HEK293T (cell line): ENCODE measurements at regions of chr15 and their contacts with region 1.

Region 1: DNA sequence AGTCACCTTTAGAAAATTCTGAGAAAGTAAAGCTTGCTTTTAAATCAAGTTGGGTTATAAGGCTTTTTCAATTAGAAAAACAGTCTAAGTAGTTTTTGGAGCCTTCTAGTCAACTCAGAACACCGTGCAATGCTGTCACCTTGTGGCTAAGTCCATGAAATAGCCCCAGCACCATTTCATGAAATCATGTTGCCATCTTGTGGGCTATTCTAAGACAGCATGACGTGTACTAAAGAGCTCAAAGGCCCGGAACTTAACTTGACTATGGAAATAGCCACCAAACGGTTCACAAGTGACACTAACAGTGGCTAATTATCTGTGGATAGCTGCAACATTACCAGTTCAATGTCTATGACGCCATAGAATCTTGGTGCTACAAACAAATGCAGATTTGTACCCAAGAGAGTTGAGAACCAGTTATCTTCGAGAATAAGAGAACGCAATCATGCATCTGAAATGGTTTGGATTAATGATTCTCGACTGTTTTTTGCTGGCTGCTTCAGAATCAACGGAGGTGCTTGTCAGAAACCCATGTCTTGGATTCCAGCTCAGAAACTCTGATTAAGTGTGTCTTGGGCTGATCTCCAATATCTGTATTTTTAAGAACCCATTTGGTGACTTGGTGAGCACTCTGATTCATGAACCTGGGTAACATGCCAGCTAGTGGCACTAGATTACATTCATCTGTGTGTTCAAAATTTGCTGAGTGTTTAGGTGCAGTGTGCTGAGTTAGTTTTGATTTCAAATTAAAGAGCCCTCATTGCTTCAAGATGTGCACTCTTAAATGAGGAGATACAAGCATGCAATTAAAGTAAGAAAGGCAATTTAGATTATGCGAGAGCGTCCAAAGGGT is 111.2 kb upstream of the MCTP2 start:
- DNase-seq: peak; percentile 73

Region 2: DNA sequence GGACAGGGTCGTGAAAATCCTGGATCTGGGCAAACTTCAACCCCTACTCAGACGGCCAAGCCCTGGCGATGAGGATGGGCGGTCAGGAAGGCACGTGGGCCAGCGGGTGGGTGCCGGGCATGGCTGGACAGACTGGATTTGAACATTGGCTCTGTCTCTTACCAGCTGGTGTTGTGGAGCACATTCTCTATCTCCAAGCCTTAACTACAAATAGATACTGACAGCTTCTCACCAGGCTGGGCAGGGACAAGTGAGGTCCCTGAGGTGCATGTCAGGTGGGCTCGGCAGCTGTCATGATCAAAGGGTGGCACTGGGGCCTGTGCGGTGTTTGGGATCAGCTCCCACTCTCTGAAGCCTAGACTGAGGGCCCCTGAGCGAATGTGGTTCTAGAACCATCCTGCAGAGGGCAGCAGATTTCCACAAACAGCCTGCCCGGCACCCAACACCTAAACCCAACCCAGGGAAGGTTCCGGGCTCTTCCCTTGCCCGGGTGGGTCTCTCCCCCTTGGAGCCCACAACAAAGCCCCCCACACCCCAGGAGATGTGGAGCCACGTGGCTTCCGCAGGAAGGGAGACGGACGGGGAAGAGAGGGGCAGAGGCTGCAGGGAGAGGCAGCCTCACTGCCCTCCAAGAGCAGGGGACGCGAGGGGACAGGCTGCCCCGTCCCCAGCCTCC is 1089.6 kb before region 1 on chr15:
- CTCF ChIA-PET with region 1: interaction called, 73 read pairs
- POLR2A ChIA-PET with region 1: interaction called, 5 read pairs
- DNase-seq: peak; percentile 85

Region 3: GRCh38 chr15:93035953-93036800 is 1084.0 kb before region 1 on chr15:
- CTCF ChIA-PET with region 1: interaction called, 73 read pairs
- POLR2A ChIA-PET with region 1: no interaction called
- DNase-seq: peak; percentile 81

Region 4: GRCh38 chr15:93087825-93088199 is 1032.3 kb before region 1 on chr15:
- CTCF ChIA-PET with region 1: interaction called, 11 read pairs
- POLR2A ChIA-PET with region 1: no interaction called
- DNase-seq: peak; percentile 81

Region 5: DNA sequence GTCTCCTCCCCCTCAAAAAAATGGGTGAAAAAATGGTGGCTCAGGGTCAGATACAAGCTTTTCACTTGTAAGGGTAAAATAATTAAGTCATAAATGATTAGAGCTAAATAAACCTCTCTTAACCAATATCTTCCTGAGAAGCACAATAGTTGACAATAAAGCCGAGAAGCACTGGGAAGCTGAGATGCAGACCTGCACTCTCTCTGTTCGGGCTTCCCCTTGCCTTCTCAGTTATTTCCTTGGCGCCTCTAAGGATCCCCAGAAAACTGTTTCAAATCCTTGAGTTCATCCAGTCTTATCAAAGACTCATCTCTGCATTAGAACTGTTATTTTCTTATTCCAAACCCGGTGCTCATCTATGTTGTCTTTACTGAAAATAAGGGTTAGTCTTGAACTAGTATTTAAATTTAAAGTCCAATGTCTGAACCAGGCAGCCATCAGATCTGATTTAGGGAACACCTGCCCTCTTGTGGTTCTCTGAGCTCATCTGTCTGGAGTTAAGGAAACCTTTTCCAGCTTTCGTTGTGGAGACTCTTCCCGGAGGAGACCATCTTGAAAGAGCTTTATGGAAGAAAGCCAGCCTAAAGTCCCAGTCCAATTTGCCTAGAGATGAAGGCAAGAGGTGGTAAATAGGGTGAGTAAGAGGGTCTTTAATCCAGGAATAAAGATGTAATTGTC is 145.2 kb before region 1 on chr15:
- CTCF ChIA-PET with region 1: interaction called, 18 read pairs
- POLR2A ChIA-PET with region 1: no interaction called
- DNase-seq: peak; percentile 58

Region 6: GRCh38 chr15:93997084-93997918 is 122.8 kb before region 1 on chr15:
- CTCF ChIA-PET with region 1: interaction called, 13 read pairs
- POLR2A ChIA-PET with region 1: no interaction called
- DNase-seq: peak; percentile 39

Region 7: GRCh38 chr15:94008104-94009074 is 111.8 kb before region 1 on chr15:
- CTCF ChIA-PET with region 1: interaction called, 14 read pairs
- POLR2A ChIA-PET with region 1: no interaction called
- DNase-seq: no peak

Region 8: GRCh38 chr15:94154245-94154644 is 34.1 kb after region 1 on chr15:
- CTCF ChIA-PET with region 1: no interaction called
- POLR2A ChIA-PET with region 1: no interaction called
- DNase-seq: no peak